PC-9 (cell line): ENCODE measurements at regions of chr4 and their contacts with region 1.

Region 1: DNA sequence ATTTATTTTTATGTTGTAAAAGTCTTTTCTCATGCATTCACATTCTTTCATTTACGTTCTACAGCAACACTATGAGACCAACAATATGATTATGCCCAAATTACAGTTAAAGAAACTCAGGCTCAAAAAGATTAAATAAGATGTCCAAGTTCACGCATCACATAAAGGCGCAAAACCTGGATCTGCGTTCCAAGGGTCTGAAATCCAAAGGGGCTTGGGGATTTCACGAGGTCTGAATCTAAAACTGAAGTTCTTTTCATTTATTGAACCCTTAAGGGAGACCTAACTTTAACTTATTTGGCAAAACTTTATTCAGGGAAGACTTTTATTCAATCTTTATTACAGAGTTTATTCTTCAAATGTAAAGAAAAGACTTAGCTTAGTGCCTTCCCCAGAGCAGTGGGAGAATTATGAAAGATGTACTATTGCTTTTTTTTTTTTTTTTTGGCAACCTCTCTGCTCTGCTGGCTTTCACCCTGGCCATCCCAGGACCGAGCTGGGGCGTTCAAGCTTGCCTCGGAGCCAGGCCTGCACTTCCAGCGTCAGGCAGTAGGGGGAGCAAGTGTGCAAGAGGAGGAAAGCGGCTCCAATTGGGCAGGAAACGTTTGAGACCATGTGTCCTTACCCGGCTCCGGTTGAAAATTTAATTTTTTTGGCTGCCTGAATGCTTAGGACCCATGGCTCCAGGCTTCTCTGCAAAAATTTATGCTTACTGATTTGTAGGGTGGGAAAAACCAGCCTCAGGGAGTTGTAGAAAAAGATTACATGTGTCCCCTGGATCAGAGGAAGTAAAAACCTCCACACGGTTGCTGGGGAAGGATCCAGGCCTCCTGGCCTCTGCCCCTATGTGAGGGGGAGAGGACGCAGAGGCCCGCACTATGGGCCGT is 344.3 kb upstream of the KLF3 start:
- DNase-seq: peak; percentile 79 to 92
- H3K4me3 ChIP-seq: peak overlapping the region; percentile 10; the same call in 1 of the 2 replicates
- H3K27ac ChIP-seq: peak overlapping the region; percentile 76
- H3K4me1 ChIP-seq: peaks cover 27% of the 10 kb centered on the region
- H3K27me3 ChIP-seq: no peaks in the 10 kb centered on the region
- CTCF ChIP-seq: peak; percentile 98

Region 2: GRCh38 chr4:38078590-38079421 is 240.9 kb before region 1 on chr4:
- CTCF ChIA-PET with region 1: no interaction called
- POLR2A ChIA-PET with region 1: no interaction called
- intact Hi-C with region 1: loop called (anchors 5 kb)
- DNase-seq: peak in 1 of 2 experiments; percentile 89
- H3K4me3 ChIP-seq: no peak overlapping the region
- H3K27ac ChIP-seq: peak overlapping the region; percentile 80
- H3K4me1 ChIP-seq: peaks cover 81% of the 10 kb centered on the region
- H3K27me3 ChIP-seq: no peaks in the 10 kb centered on the region
- CTCF ChIP-seq: no peak

Region 3: GRCh38 chr4:38154681-38155608 is 164.8 kb before region 1 on chr4:
- CTCF ChIA-PET with region 1: no interaction called
- POLR2A ChIA-PET with region 1: no interaction called
- intact Hi-C with region 1: no loop called
- DNase-seq: peak; percentile 46 to 49
- H3K4me3 ChIP-seq: no peak overlapping the region
- H3K27ac ChIP-seq: no peak overlapping the region
- H3K4me1 ChIP-seq: peaks cover 48% of the 10 kb centered on the region
- H3K27me3 ChIP-seq: no peaks in the 10 kb centered on the region
- CTCF ChIP-seq: no peak

Region 4: GRCh38 chr4:38230121-38230801 is 89.4 kb before region 1 on chr4:
- CTCF ChIA-PET with region 1: no interaction called
- POLR2A ChIA-PET with region 1: no interaction called
- intact Hi-C with region 1: loop called (anchors 2 kb)
- DNase-seq: peak; percentile 73 to 95
- H3K4me3 ChIP-seq: peak overlapping the region; percentile 13; the same call in 1 of the 2 replicates
- H3K27ac ChIP-seq: peak overlapping the region; percentile 77
- H3K4me1 ChIP-seq: peaks cover 35% of the 10 kb centered on the region
- H3K27me3 ChIP-seq: no peaks in the 10 kb centered on the region
- CTCF ChIP-seq: no peak

Region 5: GRCh38 chr4:38455092-38455862 is 135.6 kb after region 1 on chr4:
- CTCF ChIA-PET with region 1: no interaction called
- POLR2A ChIA-PET with region 1: no interaction called
- intact Hi-C with region 1: no loop called
- DNase-seq: no peak
- H3K4me3 ChIP-seq: no peak overlapping the region
- H3K27ac ChIP-seq: no peak overlapping the region
- H3K4me1 ChIP-seq: no peaks in the 10 kb centered on the region
- H3K27me3 ChIP-seq: no peaks in the 10 kb centered on the region
- CTCF ChIP-seq: no peak

Region 6: DNA sequence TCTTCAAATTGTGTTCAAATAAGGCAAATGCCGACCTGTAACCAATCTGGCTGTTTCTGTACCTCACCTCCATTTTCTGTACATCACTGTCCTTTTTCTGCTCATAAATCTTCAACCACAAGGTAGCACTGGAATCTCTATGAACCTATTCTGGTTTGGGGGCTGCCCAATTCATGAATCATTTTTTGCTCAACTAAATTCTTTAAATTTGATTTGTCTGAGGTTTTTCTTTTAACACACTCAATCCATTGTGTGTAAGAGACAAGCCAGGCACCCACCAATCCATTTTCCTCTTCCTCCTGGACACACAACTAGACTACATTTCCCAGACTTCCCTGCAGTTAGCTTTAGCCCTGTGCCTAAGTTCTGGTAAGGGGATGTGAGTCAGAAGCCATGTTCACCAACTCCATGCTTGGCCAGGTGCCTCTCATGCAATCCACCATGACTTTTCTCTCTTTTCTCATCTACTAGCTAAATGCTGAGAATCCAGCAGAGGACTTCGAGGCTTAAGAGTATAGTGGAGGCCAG is 151.1 kb after region 1 on chr4:
- CTCF ChIA-PET with region 1: no interaction called
- POLR2A ChIA-PET with region 1: no interaction called
- intact Hi-C with region 1: no loop called
- DNase-seq: no peak
- H3K4me3 ChIP-seq: no peak overlapping the region
- H3K27ac ChIP-seq: no peak overlapping the region
- H3K4me1 ChIP-seq: no peaks in the 10 kb centered on the region
- H3K27me3 ChIP-seq: no peaks in the 10 kb centered on the region
- CTCF ChIP-seq: no peak

Region 7: GRCh38 chr4:38547052-38547451 is 227.4 kb after region 1 on chr4:
- CTCF ChIA-PET with region 1: interaction called, 14 read pairs
- POLR2A ChIA-PET with region 1: no interaction called
- intact Hi-C with region 1: no loop called
- DNase-seq: no peak
- H3K4me3 ChIP-seq: no peak overlapping the region
- H3K27ac ChIP-seq: no peak overlapping the region
- H3K4me1 ChIP-seq: no peaks in the 10 kb centered on the region
- H3K27me3 ChIP-seq: no peaks in the 10 kb centered on the region
- CTCF ChIP-seq: no peak

Region 8: DNA sequence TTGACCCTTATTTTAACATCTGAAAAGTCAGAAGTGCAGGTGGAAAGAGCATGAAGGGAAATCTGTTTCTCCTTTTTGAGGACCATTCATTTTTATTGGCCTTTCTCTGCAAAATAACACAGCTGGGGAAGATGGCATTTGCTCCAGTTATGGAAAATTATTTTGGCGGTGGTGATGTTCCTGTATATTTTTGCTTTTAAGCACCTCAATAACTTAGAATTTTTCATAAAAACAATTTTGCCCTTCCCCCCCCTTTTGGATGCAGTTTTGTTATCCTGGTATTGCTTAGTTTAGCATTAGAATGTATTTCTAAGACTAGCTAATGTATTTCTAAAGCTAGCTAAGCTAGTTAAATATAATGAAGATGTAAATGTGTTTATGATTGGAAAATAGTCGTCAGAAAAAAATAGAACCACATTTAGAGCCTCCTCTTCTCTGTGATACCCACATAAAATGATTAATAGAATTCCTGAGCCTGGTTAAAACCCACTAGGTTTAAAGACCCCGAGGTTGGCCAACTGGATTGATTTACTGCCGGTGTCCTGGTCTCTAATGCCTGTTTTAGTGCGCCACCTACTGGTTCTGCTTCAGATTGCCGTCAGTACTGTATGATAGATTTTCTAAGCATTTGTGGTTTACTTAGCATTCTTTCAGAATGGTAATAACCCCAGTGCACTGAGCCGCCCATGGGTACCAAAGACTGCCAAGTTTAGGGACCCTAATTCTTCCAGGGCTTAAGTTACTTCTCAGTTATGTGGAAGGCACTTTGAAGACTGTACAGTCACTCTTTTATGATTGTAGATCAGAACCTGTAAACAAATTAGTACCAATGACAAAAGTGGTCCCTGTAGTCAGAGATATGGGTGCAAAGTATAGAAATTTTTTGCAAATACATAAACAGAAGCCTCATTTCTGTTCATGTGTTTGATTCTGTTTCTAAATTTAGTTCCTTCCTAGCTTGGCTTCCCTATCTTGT is 355.7 kb after region 1 on chr4:
- CTCF ChIA-PET with region 1: interaction called, 6 read pairs
- POLR2A ChIA-PET with region 1: no interaction called
- intact Hi-C with region 1: loop called (anchors 1 kb)
- DNase-seq: peak; percentile 71 to 73
- H3K4me3 ChIP-seq: peak overlapping the region; percentile 34; the same call in 1 of the 2 replicates
- H3K27ac ChIP-seq: peak overlapping the region; percentile 74
- H3K4me1 ChIP-seq: peaks cover 57% of the 10 kb centered on the region
- H3K27me3 ChIP-seq: no peaks in the 10 kb centered on the region
- CTCF ChIP-seq: peak; percentile 96